ENCODE measurements at regions of chr7 and their contacts with region 1.

Region 1: DNA sequence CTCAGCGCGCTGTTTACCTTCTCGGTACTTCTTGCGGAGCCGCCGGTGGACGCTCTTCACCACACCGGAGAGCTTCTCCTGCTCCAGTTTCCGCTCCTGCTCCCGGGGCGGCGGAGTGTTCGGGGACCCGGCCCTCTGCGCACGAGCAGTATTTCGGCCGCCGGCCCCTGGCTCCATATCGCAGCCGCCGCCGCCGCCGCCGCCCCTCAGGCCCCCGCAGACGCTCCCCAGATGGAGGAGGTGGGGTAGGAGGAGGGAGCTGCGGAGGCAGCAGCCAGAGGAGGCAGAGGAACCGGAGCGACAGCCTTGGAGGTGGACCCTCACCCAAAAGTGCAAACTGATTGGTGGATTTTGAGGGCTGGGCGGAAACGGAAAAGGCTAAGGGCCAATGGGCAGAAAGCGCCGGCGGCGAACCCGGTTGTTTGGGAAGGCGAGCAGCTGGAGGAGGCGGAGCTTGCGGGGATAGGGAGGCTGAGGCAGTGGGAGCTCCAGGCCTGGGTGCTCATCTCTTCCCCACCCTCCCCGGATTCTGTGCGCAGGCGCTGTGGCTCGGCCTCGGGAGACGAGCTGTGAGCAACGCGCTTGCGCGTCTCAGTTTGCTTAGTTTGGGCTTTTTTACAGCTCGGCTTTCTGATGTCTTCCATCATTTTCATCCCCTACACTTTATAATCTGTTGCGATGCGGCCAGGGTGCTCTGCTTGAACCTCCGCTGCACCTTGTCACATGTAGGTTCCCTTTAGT is 146.9 kb downstream of the GPR85 start:
- DNase-seq: peak; percentile 99
- H3K4me3 Mint-ChIP-seq: peak overlapping the region; percentile 94
- H3K27ac Mint-ChIP-seq: peak overlapping the region; percentile 96
- H3K4me1 Mint-ChIP-seq: peaks cover 38% of the 10 kb centered on the region
- H3K27me3 Mint-ChIP-seq: no peaks in the 10 kb centered on the region

Region 2: GRCh38 chr7:112206238-112207044 is 733.3 kb before region 1 on chr7 and contains the starts of genes DOCK4 and ZNF277:
- CTCF ChIA-PET with region 1: no interaction called
- intact Hi-C with region 1: loop called (anchors 1 kb)
- DNase-seq: peak; percentile 99
- H3K4me3 Mint-ChIP-seq: peak within 1 kb of the TSS; percentile 97
- H3K27ac Mint-ChIP-seq: peak within 1 kb of the TSS; percentile 71
- H3K4me1 Mint-ChIP-seq: peaks cover 35% of the 10 kb centered on the region
- H3K27me3 Mint-ChIP-seq: peaks cover 28% of the 10 kb centered on the region
- total RNA-seq, gene DOCK4: 0.43 to 0.62 TPM
- total RNA-seq, gene ZNF277: 27.0 to 28.2 TPM

Region 3: GRCh38 chr7:112638675-112639400 is 300.9 kb before region 1 on chr7:
- CTCF ChIA-PET with region 1: no interaction called
- intact Hi-C with region 1: no loop called
- DNase-seq: no peak
- H3K4me3 Mint-ChIP-seq: no peak overlapping the region
- H3K27ac Mint-ChIP-seq: no peak overlapping the region
- H3K4me1 Mint-ChIP-seq: no peaks in the 10 kb centered on the region
- H3K27me3 Mint-ChIP-seq: peaks cover 9% of the 10 kb centered on the region

Region 4: DNA sequence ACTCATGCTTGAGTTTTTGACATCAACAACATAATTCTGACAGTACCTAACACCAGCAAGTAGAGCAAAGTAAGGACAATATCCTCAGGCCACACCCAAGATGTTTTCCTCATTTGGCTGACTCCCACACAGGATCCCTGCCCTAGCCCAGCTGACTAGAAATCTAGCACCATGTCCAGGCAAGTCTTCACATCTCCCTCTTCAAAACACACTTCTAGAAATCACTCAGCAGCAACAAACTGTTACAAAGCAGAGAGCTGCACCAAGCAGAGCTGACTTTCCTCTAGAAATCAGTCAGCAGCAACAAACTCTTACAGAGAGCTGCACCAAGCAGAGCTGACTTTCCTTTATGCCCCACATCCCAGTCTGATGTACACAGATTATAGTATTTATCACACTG is 157.2 kb before region 1 on chr7:
- CTCF ChIA-PET with region 1: no interaction called
- intact Hi-C with region 1: loop called (anchors 1 kb)
- DNase-seq: peak; percentile 66
- H3K4me3 Mint-ChIP-seq: peak overlapping the region; percentile 23
- H3K27ac Mint-ChIP-seq: peak overlapping the region; percentile 27
- H3K4me1 Mint-ChIP-seq: peaks cover 29% of the 10 kb centered on the region
- H3K27me3 Mint-ChIP-seq: no peaks in the 10 kb centered on the region

Region 5: GRCh38 chr7:113118074-113118959 is 178.6 kb after region 1 on chr7 and contains the start of gene SMIM30:
- CTCF ChIA-PET with region 1: no interaction called
- intact Hi-C with region 1: loop called (anchors 1 kb)
- DNase-seq: peak; percentile 92
- H3K4me3 Mint-ChIP-seq: peak within 1 kb of the TSS; percentile 85
- H3K27ac Mint-ChIP-seq: peak within 1 kb of the TSS; percentile 79
- H3K4me1 Mint-ChIP-seq: peaks cover 28% of the 10 kb centered on the region
- H3K27me3 Mint-ChIP-seq: no peaks in the 10 kb centered on the region
- total RNA-seq, gene SMIM30: 40.1 to 41.2 TPM

Region 6: DNA sequence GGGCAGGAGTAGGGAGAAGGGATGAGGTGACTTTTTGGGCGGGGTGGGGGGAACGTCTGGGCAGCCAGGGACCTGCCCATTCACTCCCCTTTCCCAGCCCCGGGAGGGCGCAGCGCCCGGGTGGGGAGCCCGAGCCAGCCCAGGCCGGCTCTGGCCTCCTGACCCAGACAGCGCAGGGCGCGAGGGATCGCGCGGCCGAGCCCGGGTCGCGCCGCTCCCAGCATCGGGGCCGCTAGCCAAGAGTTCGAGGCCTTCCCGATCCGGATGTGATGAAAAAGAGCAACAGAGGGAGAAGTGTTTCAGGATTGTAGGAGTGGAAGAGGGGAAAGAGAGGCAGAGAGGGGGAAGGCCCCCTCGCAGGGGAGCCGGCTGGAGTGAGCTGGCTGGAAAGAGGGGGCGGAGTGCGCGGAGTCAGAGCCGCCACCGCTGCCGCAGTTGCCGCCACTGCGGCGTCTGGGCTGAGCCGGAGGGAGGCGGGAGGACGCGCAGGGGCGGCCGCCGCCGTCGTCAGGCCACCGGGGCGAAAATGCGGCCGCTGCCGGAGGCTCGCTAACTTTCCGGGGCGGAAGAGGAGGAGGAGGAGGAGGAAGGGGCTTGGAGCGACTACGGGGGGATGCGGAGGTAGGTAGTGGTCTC is 1982.4 kb after region 1 on chr7 and contains the start of gene MDFIC:
- CTCF ChIA-PET with region 1: no interaction called
- intact Hi-C with region 1: loop called (anchors 5 kb)
- DNase-seq: peak; percentile 76
- H3K4me3 Mint-ChIP-seq: peak within 1 kb of the TSS; percentile 98
- H3K27ac Mint-ChIP-seq: peak within 1 kb of the TSS; percentile 99
- H3K4me1 Mint-ChIP-seq: peaks cover 63% of the 10 kb centered on the region
- H3K27me3 Mint-ChIP-seq: no peaks in the 10 kb centered on the region
- total RNA-seq, gene MDFIC: 79.4 to 93.1 TPM

Measured in activated naive CD4-positive, alpha-beta T cell treated with anti-CD3 and anti-CD28 coated beads for 36 hours (primary cell).